ENCODE measurements at regions of chr21 and their contacts with region 1.

Region 1: DNA sequence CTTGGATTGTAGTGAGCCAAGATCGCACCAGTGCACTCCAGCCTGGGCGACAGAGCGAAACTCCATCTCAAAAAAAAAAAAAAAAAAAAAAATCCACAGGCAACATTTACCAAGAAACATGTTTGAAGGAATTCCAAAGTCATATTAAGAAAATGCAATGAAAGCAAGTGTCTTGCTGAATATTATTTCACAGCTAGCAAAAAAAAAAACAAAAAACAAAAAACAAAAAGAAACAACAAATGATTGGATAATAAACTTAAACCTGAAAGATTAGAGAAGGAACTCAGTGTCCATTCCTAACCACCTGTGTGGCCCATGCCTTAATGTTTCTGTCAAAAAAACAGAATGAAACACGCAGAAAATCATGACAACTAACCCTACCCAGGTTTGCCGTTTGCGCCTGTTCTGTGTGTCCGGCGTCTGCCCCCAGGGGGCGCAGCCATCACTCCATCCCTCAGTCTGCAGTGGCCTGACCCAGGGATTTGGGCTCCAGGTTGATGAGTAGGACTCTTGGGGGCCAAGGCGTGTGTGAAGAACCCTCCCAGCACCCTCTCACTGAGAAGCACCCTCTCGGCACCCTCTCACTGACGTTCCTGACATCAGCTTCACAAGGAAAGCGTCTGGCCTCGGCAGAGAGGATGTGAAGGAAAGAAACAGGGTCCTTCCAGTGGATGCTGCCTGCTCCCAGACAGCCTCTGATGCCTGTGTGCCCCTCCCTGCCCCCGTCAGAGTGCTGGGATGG is 19.2 kb upstream of the PTTG1IP start:
- DNase-seq: peak; percentile 86
- H3K4me3 Mint-ChIP-seq: no peak overlapping the region
- H3K27ac Mint-ChIP-seq: peak overlapping the region; percentile 54
- H3K4me1 Mint-ChIP-seq: peaks cover 13% of the 10 kb centered on the region
- H3K27me3 Mint-ChIP-seq: no peaks in the 10 kb centered on the region

Region 2: DNA sequence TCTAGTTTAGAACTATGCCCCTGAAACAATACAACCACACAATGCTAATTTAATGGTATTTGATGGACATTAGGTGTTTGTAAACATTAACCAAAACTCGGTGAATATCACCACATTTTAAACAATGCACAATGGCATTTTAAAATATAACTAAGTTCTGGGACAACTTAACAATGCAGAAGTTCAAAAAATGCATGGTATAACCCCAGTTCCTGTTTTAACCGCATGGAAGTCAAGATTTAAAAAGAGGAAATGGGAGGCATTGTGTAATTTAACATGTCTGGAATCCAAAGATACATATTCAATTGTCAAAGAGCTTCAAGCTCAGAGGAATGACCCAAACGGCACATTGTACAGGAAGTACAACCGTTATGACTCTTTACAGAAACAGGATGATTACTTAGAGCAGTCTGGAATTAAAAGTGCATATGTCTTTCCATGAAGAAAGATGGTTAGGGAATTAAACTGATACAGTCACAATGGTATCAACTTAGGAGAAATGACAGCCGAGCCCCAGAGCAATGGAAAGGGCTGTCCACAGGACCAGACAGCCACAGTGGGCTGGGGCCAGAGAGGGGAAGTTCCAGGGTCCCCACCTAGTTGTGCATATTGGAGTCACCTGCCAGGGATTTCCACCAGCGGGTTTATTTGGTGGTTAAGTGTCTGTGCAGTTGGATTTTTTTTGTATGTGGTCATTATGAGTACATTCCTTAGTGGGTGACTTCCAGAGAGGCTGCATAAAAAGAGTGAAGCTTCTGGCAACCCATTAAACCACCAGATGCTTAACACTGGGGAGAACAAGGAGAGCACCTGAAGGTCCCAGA is 11.7 kb before region 1 on chr21:
- CTCF ChIA-PET with region 1: interaction called, 14 read pairs
- POLR2A ChIA-PET with region 1: interaction called, 4 read pairs
- intact Hi-C with region 1: no loop called
- DNase-seq: peak; percentile 31
- H3K4me3 Mint-ChIP-seq: no peak overlapping the region
- H3K27ac Mint-ChIP-seq: peak overlapping the region; percentile 79
- H3K4me1 Mint-ChIP-seq: peaks cover 21% of the 10 kb centered on the region
- H3K27me3 Mint-ChIP-seq: no peaks in the 10 kb centered on the region

Region 3: DNA sequence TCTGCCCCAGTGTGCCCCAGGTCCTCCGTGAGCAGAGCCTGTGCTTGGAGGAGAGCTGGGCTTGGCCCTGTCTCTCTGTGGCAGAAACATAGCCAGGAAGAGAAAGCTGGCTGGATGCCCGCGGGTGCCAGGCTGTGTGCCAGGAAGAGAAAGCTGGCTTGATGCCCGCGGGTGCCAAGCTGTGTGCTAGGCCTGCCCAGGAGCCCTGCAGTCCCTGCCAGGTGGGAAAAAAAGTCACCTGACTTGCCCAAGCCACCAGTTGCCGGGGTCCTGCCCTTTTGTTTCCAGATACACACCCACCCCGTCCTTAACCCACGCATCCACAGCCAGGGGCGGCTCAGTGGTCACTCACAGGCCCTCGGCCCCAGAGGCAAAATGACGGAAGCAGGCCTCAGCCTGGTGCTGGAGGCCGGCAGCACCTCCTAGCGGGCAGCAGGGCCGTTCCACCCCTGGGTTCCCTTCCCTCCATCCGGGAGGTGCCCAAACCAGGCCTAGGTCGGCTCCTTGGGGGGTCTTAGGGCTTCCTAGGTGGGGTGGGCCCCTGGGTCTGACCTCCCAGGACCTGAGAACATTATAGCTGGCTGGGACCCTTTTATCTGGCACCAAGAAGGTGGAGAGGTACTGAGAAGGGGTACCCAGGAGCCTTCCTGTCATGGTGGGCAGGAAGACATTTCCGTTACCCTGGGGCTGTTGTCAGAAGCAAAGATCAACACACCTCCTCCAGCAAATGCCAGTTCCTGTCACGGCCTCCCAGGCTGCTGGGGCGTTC is 18.9 kb after region 1 on chr21:
- CTCF ChIA-PET with region 1: interaction called, 19 read pairs
- POLR2A ChIA-PET with region 1: interaction called, 4 read pairs
- intact Hi-C with region 1: loop called (anchors 1 kb)
- DNase-seq: peak; percentile 75
- H3K4me3 Mint-ChIP-seq: peak overlapping the region; percentile 58
- H3K27ac Mint-ChIP-seq: peak overlapping the region; percentile 93
- H3K4me1 Mint-ChIP-seq: peaks cover 60% of the 10 kb centered on the region
- H3K27me3 Mint-ChIP-seq: no peaks in the 10 kb centered on the region